ENCODE measurements at regions of chrX and their contacts with region 1.

Region 1: GRCh38 chrX:10189317-10190268 is 32.8 kb downstream of the CLCN4 start:
- DNase-seq: peak; percentile 70 to 77
- ATAC-seq: peak; percentile 93 to 97
- H3K4me3 ChIP-seq: 0 out of 3 replicates have a peak overlapping the region, but pooled peaks have one; percentile 15
- H3K27ac ChIP-seq: peak overlapping the region; percentile 58 to 80
- H3K4me1 ChIP-seq: peaks cover 14% of the 10 kb centered on the region
- CTCF ChIP-seq: peak; percentile 78
- EP300 ChIP-seq: no peak
- POLR2A ChIP-seq: no peak
- RAD21 ChIP-seq: peak; percentile 89 to 90

Region 2: DNA sequence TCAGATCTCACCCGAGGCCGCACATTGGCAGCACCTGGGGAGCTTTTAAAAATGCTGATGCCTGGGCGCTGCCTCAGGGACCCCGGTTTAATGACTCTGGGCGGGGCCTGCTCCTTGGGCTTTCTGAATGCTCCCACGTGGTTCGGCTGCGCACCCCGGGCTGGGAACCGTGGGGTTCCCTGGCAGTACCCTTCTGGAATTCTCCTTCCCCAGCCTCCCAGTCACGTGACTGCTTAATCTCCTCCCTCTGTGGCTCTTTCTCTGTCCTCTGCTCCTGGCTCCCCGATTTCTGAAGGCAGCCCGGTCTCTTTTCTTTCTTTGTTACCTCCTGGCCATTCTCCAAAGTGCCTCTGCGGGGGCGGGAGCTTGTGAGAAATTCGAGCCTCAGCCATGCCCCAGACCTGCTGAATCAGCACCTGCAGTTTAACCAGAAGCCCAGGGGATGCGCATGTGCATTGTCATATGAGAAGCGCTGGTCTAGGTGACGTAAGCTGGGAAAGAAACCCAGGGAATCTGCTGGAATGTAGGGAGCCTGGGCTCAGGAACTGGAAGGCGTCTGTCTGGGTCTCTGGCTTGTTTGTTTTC is 16.2 kb before region 1 on chrX:
- CTCF ChIA-PET with region 1: interaction called, 29 read pairs
- POLR2A ChIA-PET with region 1: no interaction called
- DNase-seq: no peak
- ATAC-seq: no peak
- H3K4me3 ChIP-seq: no peak overlapping the region
- H3K27ac ChIP-seq: no peak overlapping the region
- H3K4me1 ChIP-seq: 0 out of 3 replicates have a peak, but pooled peaks cover 6% of the 10 kb centered on the region
- CTCF ChIP-seq: no peak
- EP300 ChIP-seq: no peak
- POLR2A ChIP-seq: no peak
- RAD21 ChIP-seq: no peak

Region 3: GRCh38 chrX:10254741-10255140 is 65.1 kb after region 1 on chrX:
- CTCF ChIA-PET with region 1: interaction called, 12 read pairs
- POLR2A ChIA-PET with region 1: no interaction called
- DNase-seq: peak; percentile 20 to 52
- ATAC-seq: peak; percentile 56 to 61; a peak in 5 of 6 replicates
- H3K4me3 ChIP-seq: no peak overlapping the region
- H3K27ac ChIP-seq: peak overlapping the region; percentile 42 to 64; a peak in 4 of 6 replicates
- H3K4me1 ChIP-seq: peaks cover 7% of the 10 kb centered on the region; the same call in 2 of the 3 replicates
- CTCF ChIP-seq: peak; percentile 54
- EP300 ChIP-seq: no peak
- POLR2A ChIP-seq: no peak
- RAD21 ChIP-seq: peak; percentile 71 to 78

Region 4: DNA sequence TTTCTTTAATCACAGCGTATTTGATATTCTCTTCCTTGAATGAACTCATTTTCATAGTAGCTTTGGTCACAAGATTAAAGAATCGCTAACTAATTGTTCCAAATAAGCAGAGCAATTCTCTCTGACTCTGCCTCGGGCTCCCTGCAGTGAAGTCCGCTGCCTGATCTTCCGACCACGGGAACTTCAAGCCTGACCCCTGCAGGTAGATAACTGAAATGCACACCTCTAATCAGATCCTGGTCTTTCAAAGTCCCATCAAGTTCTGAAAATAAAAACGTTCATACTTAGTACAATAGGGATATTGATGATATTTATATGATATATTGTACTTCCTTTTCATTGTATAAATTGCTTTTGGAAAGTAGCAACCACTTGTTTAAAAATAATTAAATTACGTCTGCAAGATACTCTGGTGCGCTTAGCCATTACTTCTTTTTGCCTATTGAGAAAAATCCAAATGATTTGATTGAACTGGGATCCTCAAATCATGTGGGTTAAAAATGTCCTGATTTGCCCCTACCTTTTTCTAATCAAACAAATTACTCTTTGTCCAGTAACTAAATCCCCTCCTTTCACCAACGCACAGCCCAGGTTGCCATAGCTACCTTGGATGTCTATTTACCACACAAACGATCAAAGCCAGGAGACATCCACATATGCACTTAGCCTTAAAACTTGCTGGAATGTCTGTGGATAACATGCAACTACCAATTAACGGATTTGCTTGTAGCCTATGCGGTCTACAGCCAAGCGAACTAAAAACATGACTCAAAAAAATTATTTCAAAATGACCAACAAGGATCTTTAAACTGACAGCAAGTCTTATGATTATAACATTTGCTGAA is 426.6 kb after region 1 on chrX:
- CTCF ChIA-PET with region 1: interaction called, 42 read pairs
- POLR2A ChIA-PET with region 1: interaction called, 3 read pairs
- DNase-seq: peak in 1 of 2 experiments; percentile 73
- ATAC-seq: peak; percentile 41 to 52; a peak in 3 of 6 replicates
- H3K4me3 ChIP-seq: peak overlapping the region; percentile 68
- H3K27ac ChIP-seq: peak overlapping the region; percentile 76 to 95
- H3K4me1 ChIP-seq: peaks cover 44% of the 10 kb centered on the region
- CTCF ChIP-seq: peak; percentile 75
- EP300 ChIP-seq: no peak
- POLR2A ChIP-seq: no peak
- RAD21 ChIP-seq: peak; percentile 78

Region 5: GRCh38 chrX:10722851-10723250 is 533.3 kb after region 1 on chrX:
- CTCF ChIA-PET with region 1: interaction called, 58 read pairs
- POLR2A ChIA-PET with region 1: no interaction called
- DNase-seq: peak; percentile 47 to 51
- ATAC-seq: peak; percentile 83 to 88; a peak in 5 of 6 replicates
- H3K4me3 ChIP-seq: no peak overlapping the region
- H3K27ac ChIP-seq: 0 out of 6 replicates have a peak overlapping the region, but pooled peaks of 1 of the 2 experiments have one; percentile 20
- H3K4me1 ChIP-seq: no peaks in the 10 kb centered on the region; the same call in 2 of the 3 replicates
- CTCF ChIP-seq: peak; percentile 66
- EP300 ChIP-seq: no peak
- POLR2A ChIP-seq: no peak
- RAD21 ChIP-seq: peak; percentile 76 to 77

Region 6: GRCh38 chrX:11137543-11138139 is 948.0 kb after region 1 on chrX:
- CTCF ChIA-PET with region 1: interaction called, 42 read pairs
- POLR2A ChIA-PET with region 1: no interaction called
- DNase-seq: peak in 1 of 2 experiments; percentile 23
- ATAC-seq: no peak
- H3K4me3 ChIP-seq: no peak overlapping the region
- H3K27ac ChIP-seq: no peak overlapping the region
- H3K4me1 ChIP-seq: no peaks in the 10 kb centered on the region
- CTCF ChIP-seq: peak; percentile 63
- EP300 ChIP-seq: no peak
- POLR2A ChIP-seq: no peak
- RAD21 ChIP-seq: peak; percentile 36 to 46; a peak in 4 of 5 replicates